ENCODE measurements at regions of chr5 and their contacts with region 1.

Region 1: DNA sequence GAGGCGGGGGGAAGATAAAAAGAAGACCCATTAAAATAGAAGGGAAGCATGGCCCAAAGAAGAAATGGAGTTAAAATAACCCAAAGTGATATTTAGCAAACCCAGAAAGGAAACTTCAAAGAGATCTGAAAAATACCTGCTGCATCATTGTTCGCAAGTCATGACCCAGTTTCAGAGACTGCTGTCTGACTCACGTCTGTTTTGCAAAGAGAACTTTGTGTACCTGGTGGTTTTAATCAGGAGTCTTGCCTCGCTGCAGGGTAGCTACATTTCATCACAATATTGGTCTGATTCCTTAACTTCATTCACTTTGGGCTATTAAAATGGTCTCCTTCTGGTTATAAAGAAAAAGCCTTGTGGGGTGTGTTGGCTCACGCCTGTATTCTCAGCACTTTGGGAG is 461.1 kb upstream of the DAP start:
- DNase-seq: no peak
- H3K4me3 ChIP-seq: no peak overlapping the region
- H3K27ac ChIP-seq: no peak overlapping the region
- H3K4me1 ChIP-seq: peaks cover 0 to 18% (median 16%) of the 10 kb centered on the region in 4 experiments
- H3K27me3 ChIP-seq: no peaks in the 10 kb centered on the region

Region 2: DNA sequence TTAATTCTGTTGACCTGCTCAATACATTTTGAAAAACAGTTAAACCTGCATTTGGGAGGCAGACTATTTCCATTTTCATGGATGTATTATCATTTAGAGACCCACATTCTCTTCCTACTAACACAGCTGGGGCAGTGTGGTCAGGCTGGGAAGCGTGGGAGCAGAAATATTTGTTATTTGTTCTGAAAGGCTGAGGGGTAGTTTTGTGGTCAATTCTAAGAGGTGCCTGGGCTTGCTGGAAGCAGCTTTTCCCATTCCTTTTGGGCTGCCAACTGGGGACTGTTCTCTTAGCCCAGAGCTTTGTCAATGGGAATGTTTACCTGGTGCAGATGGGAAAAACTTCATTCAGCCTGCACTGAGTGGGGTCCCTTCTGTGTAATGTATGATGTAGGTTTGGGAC is 289.7 kb before region 1 on chr5:
- CTCF ChIA-PET with region 1: no interaction called
- POLR2A ChIA-PET with region 1: no interaction called
- DNase-seq: no peak
- H3K4me3 ChIP-seq: no peak overlapping the region
- H3K27ac ChIP-seq: no peak overlapping the region
- H3K4me1 ChIP-seq: no peaks in the 10 kb centered on the region
- H3K27me3 ChIP-seq: no peaks in the 10 kb centered on the region

Region 3: DNA sequence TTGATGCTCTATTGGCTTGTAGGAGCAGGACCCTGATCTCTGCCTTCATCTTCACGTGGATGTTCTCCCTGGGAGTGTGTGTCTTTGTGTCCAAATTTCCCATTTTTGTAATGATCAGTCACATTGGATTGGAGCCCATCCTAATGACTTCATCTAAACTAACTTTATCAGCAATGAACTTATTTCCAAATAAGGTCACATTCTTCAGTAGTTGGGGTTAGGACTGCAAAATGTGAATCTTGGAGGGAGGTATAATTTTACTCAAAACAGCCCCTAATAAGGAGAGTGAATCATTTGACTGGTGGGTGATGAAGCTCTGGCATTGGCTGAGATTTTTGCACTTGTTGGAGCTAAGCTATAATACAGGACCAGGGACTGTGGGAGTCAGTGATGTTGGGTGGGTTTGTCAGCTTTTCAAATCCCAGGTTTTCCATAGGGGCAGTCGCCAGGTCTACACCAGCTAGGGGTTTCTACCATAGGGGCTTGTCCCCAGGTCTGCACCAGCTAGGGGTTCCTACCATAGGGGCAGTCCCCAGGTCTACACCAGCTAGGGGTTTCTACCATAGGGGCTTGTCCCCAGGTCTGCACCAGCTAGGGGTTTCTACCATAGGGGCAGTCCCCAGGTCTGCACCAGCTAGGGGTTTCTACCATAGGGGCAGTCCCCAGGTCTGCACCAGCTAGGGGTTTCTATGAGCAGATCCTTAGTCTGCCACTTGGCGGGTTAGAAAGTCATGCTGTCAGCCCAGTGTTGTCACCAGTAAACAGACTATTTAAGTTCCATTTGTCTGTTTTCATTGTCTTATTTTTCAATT is 78.5 kb before region 1 on chr5:
- CTCF ChIA-PET with region 1: no interaction called
- POLR2A ChIA-PET with region 1: no interaction called
- DNase-seq: no peak
- H3K4me3 ChIP-seq: no peak overlapping the region
- H3K27ac ChIP-seq: no peak overlapping the region
- H3K4me1 ChIP-seq: no peaks in the 10 kb centered on the region
- H3K27me3 ChIP-seq: no peaks in the 10 kb centered on the region

Region 4: DNA sequence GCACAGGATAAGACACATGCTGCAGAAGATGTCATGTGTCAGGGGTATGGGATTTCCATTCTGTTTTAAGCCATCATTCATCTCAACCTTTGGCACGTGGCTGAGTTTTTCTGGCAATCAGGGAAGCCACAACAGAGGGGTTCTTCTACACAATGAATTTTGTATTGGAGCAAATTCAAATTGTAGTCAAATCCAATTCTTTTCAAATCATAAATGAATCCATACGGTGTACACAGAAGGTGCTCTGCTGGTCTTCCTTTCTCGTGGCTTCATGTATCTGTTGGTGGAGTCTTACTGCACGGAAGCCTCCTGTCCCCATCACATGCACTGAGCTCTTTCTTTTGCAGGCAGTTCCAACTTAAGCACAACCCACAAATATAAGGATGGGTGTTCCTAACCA is 24.4 kb before region 1 on chr5:
- CTCF ChIA-PET with region 1: no interaction called
- POLR2A ChIA-PET with region 1: no interaction called
- DNase-seq: no peak
- H3K4me3 ChIP-seq: no peak overlapping the region
- H3K27ac ChIP-seq: no peak overlapping the region
- H3K4me1 ChIP-seq: no peaks in the 10 kb centered on the region
- H3K27me3 ChIP-seq: no peaks in the 10 kb centered on the region

Region 5: DNA sequence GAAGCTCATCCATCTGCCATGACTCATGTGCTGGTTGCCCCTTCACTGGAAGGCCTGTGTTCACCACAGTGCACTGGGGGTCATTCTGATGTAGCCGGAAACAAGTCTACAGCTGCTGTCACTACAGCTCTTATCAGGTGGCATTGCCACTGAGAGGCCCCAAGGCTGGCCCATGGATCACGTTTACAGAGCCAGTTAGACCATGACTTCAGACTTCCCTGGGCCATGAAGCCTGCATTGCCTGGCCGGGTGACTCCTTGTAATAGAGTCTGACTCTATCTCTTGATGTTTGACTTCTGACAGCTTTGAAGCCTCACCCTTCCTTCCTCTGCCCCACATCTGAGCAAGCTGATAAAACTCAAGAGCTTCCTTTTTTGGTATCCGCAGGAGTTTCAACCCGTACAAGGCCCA is 12.3 kb after region 1 on chr5:
- CTCF ChIA-PET with region 1: interaction called, 17 read pairs
- POLR2A ChIA-PET with region 1: interaction called, 8 read pairs
- DNase-seq: peak; percentile 94 to 99 (median 97)
- H3K4me3 ChIP-seq: peak overlapping the region in 1 of 7 experiments; percentile 10
- H3K27ac ChIP-seq: peak overlapping the region; percentile 51 to 80
- H3K4me1 ChIP-seq: peaks cover 22 to 36% (median 27%) of the 10 kb centered on the region in 4 experiments
- H3K27me3 ChIP-seq: no peaks in the 10 kb centered on the region

Measured in common myeloid progenitor, CD34-positive (primary cell).